Cardiac septum (tissue), 1 donor: ENCODE measurements at regions of chr5 and their contacts with region 1.

Region 1: GRCh38 chr5:34915139-34915855 is at the starts of genes BRIX1 and RAD1:
- DNase-seq: peak; percentile 99
- total RNA-seq, gene BRIX1: 14.6 TPM
- total RNA-seq, gene RAD1: 23.4 TPM

Region 2: DNA sequence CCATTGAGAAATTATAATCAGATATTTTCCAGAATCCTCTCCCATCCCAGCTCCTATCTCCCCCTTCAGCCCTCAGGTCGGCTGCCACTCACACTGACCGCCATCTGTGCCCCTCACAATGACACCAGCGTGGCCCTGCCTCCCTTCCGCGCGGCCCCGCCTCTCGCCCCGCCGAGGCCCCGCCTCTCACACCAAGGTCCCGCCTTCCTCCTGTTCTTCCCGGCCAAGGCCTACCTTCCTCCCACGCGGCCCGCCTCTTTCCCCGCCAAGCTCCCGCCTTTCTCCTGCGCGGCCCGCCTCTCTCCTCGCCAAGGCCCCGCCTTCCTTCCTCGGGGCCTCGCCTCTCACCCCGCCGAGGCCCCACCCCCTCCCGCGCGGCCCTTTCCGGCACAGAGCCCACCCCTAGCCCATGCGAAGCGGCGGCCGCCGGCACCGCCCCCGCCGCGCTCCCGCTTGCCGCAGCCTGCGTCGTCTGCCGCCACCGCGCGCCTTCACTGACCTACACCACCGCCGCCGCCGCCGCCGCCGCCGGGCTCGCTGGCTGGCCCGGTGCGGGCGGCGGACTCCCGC is 13.9 kb after region 1 on chr5 and contains the start of gene DNAJC21:
- intact Hi-C with region 1: loop called (anchors 1 kb)
- DNase-seq: peak; percentile 99
- total RNA-seq, gene DNAJC21: 68.4 TPM